CD4-positive, alpha-beta memory T cell (primary cell): ENCODE measurements at regions of chr6 and their contacts with region 1.

Region 1: DNA sequence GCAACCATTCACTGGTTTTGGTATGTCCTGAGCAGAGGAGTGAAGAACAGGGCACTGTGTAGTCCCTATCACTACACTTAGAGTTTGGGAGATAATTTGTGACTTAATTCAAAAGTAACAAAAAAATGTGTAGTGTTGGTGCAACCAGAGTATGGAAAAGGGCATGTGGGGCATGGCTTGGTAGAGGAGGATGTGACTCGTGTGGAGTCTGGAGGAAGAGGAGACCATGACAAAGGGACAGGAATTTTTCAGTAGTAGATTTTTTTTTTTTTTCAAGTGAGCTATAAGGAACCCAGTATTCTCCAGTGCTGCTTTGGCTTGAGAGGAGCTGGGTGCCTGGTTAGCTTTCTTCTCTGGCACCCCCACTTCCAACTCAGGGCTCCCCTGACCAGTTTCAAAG is 5.1 kb downstream of the MTRES1 start:
- DNase-seq: no peak
- H3K4me3 ChIP-seq: no peak overlapping the region
- H3K4me3 Mint-ChIP-seq: no peak overlapping the region
- H3K27ac ChIP-seq: no peak overlapping the region
- H3K27ac Mint-ChIP-seq: peak overlapping the region in 1 of 7 donors; percentile 19
- H3K4me1 ChIP-seq: peaks cover 15% of the 10 kb centered on the region
- H3K4me1 Mint-ChIP-seq: peaks cover 25 to 52% (median 32%) of the 10 kb centered on the region in 4 donors
- H3K27me3 ChIP-seq: no peaks in the 10 kb centered on the region
- H3K27me3 Mint-ChIP-seq: no peaks in the 10 kb centered on the region

Region 2: GRCh38 chr6:106629103-106629858 is 403.8 kb before region 1 on chr6 and contains the starts of genes QRSL1 and RTN4IP1:
- CTCF ChIA-PET with region 1: no interaction called
- POLR2A ChIA-PET with region 1: no interaction called
- intact Hi-C with region 1: loop called (anchors 1 kb)
- DNase-seq: peak; percentile 91 to 93 (median 92)
- H3K4me3 ChIP-seq: peak within 1 kb of the TSS; percentile 85 to 88
- H3K4me3 Mint-ChIP-seq: peak within 1 kb of the TSS; percentile 96 to 99 (median 97)
- H3K27ac ChIP-seq: peak within 1 kb of the TSS; percentile 74
- H3K27ac Mint-ChIP-seq: peak within 1 kb of the TSS; percentile 96 to 98 (median 98)
- H3K4me1 ChIP-seq: peaks cover 23% of the 10 kb centered on the region
- H3K4me1 Mint-ChIP-seq: peaks cover 21 to 39% (median 31%) of the 10 kb centered on the region in 4 donors
- H3K27me3 ChIP-seq: no peaks in the 10 kb centered on the region
- H3K27me3 Mint-ChIP-seq: no peaks in the 10 kb centered on the region
- total RNA-seq, gene QRSL1: 12.3 to 13.4 TPM
- total RNA-seq, gene RTN4IP1: 5.8 to 8.3 TPM

Region 3: DNA sequence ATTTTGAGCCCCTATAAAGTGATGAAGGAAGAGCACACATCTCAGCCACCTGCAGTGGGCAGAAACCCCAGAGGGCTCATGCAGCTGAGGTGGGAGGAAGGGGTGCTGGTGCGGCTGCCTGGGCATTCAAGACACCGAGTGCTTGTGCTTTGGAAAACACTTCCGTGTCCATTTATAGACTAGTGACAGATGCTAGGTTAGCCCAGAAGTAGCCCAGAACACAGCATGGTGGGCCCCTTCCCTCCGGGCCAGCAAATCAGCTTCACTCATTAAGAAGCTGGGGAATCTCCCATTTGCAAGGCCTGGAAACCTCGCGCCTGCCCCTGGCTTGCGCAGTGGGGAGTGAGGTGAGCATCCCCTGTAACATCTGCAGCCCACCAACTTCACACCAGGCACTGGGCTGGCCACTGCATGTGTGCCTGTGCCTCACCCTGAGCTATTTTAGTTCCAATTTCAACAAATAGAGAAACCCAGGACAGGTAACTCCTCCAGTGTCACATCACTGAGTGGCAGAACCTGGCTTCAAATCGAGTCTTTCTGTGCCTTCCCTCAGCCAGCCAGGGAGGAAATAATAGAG is 69.4 kb after region 1 on chr6:
- CTCF ChIA-PET with region 1: no interaction called
- POLR2A ChIA-PET with region 1: no interaction called
- intact Hi-C with region 1: no loop called
- DNase-seq: no peak
- H3K4me3 ChIP-seq: no peak overlapping the region
- H3K4me3 Mint-ChIP-seq: no peak overlapping the region
- H3K27ac ChIP-seq: no peak overlapping the region
- H3K27ac Mint-ChIP-seq: no peak overlapping the region
- H3K4me1 ChIP-seq: no peaks in the 10 kb centered on the region
- H3K4me1 Mint-ChIP-seq: no peaks in the 10 kb centered on the region
- H3K27me3 ChIP-seq: no peaks in the 10 kb centered on the region
- H3K27me3 Mint-ChIP-seq: no peaks in the 10 kb centered on the region

Region 4: GRCh38 chr6:108074359-108075144 is 1041.4 kb after region 1 on chr6 and contains the start of gene OSTM1:
- CTCF ChIA-PET with region 1: no interaction called
- POLR2A ChIA-PET with region 1: no interaction called
- intact Hi-C with region 1: loop called (anchors 2 kb)
- DNase-seq: peak; percentile 88 to 93 (median 93)
- H3K4me3 ChIP-seq: peak within 1 kb of the TSS; percentile 66 to 100
- H3K4me3 Mint-ChIP-seq: peak within 1 kb of the TSS; percentile 87 to 95 (median 90)
- H3K27ac ChIP-seq: peak within 1 kb of the TSS; percentile 78
- H3K27ac Mint-ChIP-seq: peak within 1 kb of the TSS; percentile 90 to 96 (median 94)
- H3K4me1 ChIP-seq: peaks cover 24% of the 10 kb centered on the region
- H3K4me1 Mint-ChIP-seq: peaks cover 18 to 32% (median 20%) of the 10 kb centered on the region in 4 donors
- H3K27me3 ChIP-seq: no peaks in the 10 kb centered on the region
- H3K27me3 Mint-ChIP-seq: peaks cover 0 to 5% of the 10 kb centered on the region in 2 donors
- total RNA-seq, gene OSTM1: 54.4 to 55.6 TPM